Panc1 (cell line): ENCODE measurements at regions of chr6 and their contacts with region 1.

Region 1: DNA sequence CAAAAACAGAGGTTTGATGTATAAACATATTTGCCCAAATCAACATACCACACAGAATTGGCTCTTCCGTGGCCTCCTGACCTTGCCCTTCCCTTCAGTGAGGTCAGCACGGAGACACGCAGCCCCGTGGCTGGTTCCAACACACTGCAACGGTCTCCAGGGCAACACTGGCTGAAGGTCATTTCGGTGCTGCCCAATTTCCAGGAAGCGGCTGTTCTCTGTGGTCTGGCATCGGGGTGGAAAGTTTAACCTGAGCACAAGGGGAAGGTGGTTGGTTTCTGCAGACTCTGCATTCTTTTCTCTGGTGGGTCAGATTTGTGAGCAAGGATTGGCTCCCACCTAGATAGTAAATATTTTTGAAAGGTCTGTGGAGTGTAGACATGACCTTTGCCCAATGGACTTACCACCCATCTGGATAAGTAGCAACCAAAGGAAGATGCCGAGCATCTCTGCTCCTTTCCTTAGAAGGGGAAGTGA is 177.6 kb upstream of the PHACTR1 start:
- DNase-seq: no peak
- ATAC-seq: no peak
- H3K4me3 ChIP-seq: no peak overlapping the region
- H3K27ac ChIP-seq: no peak overlapping the region
- H3K4me1 ChIP-seq: no peaks in the 10 kb centered on the region
- H3K27me3 ChIP-seq: no peaks in the 10 kb centered on the region
- CTCF ChIP-seq: no peak

Region 2: GRCh38 chr6:12516070-12516469 is 22.8 kb before region 1 on chr6:
- CTCF ChIA-PET with region 1: no interaction called
- POLR2A ChIA-PET with region 1: interaction called, 18 read pairs
- in situ Hi-C with region 1: no loop called
- intact Hi-C with region 1: no loop called
- DNase-seq: no peak
- ATAC-seq: 0 out of 2 replicates have a peak, but pooled peaks have one; percentile 53
- H3K4me3 ChIP-seq: no peak overlapping the region
- H3K27ac ChIP-seq: no peak overlapping the region
- H3K4me1 ChIP-seq: no peaks in the 10 kb centered on the region
- H3K27me3 ChIP-seq: no peaks in the 10 kb centered on the region
- CTCF ChIP-seq: no peak

Region 3: DNA sequence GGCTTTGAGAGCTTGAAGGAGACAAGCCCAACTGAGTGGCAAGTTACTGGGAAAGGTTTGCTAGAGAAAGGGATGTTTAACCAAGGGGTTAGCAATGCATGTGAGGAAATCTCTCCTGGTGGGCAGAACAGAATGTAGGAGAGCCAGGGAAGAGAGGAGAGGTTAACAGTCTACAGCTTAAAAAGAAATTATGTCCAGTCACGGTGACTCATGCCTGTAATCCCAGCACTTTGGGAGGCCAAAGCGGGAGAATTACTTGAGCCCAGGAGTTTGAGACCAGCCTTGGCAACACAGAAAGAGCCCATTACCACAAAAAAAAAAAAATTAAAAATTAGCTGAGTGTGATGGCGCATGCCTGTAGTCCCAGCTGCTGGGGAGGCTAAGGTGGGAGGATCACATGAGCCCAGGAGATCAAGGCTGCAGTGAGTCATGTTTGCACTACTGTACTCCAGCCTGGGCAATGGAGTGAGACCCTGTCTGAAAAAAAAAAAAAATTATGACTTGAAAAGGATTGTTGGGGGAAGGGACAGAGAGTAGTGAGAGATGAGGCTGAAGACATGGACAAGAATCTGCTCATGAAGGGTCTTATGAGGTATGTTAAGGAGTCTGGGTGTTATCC is 524.5 kb after region 1 on chr6:
- CTCF ChIA-PET with region 1: no interaction called
- POLR2A ChIA-PET with region 1: no interaction called
- in situ Hi-C with region 1: no loop called
- intact Hi-C with region 1: no loop called
- DNase-seq: no peak
- ATAC-seq: no peak
- H3K4me3 ChIP-seq: no peak overlapping the region
- H3K27ac ChIP-seq: no peak overlapping the region
- H3K4me1 ChIP-seq: no peaks in the 10 kb centered on the region
- H3K27me3 ChIP-seq: no peaks in the 10 kb centered on the region
- CTCF ChIP-seq: no peak